B cell (primary cell): ENCODE measurements at regions of chr14 and their contacts with region 1.

Region 1: DNA sequence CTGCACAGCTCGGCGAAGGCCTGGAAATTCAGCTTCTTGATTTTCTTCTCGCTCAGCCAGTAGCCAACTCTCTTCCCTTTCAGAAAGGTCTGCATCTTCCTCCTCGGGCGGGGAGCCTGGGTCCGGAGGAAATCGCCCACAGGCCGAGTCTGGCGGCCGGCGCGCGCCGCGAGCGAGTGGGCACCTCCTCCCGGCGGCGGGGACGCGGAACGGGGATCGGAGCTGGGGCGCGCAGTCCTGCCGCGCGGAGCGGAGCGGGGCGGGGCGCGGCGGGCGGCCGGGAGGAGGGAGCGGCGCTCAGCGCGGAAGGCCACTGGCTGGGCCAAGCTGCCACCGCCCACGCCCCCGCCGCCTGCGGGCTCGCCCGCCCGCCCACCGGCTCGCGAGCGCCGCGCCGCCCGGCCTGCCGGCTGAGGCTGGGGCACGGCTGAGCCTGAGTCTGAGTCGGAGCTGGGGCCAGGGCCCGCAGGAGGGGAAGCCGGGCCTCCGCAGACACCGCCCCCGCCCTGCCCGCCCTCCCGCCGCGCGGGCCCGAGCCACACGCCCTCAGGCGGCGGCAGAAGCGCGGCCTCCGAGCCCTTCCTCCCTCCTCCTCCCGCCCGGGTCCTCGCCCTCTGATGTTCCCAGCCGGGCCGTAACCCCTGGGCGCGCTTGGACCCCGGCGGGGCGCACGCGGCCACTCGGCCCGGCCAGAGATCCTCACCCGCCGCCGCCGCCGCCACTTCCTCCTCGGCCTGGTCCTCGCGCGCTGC is 480 bp downstream of the ITPK1 start:
- DNase-seq: peak; percentile 92
- ATAC-seq: peak; percentile 74
- H3K4me3 ChIP-seq: peak overlapping the region; percentile 37 to 89 (median 79)
- H3K4me3 Mint-ChIP-seq: peak overlapping the region; percentile 92
- H3K27ac ChIP-seq: peak overlapping the region; percentile 34 to 74
- H3K27ac Mint-ChIP-seq: peak overlapping the region; percentile 89
- H3K4me1 ChIP-seq: peaks cover 27 to 34% of the 10 kb centered on the region in 2 donors
- H3K4me1 Mint-ChIP-seq: peaks cover 32% of the 10 kb centered on the region
- H3K27me3 ChIP-seq: no peaks in the 10 kb centered on the region
- H3K27me3 Mint-ChIP-seq: no peaks in the 10 kb centered on the region
- CTCF ChIP-seq: peak; percentile 12

Region 2: GRCh38 chr14:92951912-92952471 is 163.3 kb before region 1 on chr14:
- CTCF ChIA-PET with region 1: interaction called, 40 read pairs
- POLR2A ChIA-PET with region 1: no interaction called
- intact Hi-C with region 1: loop called (anchors 1 kb)
- DNase-seq: peak; percentile 82
- ATAC-seq: peak; percentile 96
- H3K4me3 ChIP-seq: no peak overlapping the region
- H3K4me3 Mint-ChIP-seq: no peak overlapping the region
- H3K27ac ChIP-seq: no peak overlapping the region
- H3K27ac Mint-ChIP-seq: no peak overlapping the region
- H3K4me1 ChIP-seq: peaks cover 0 to 5% of the 10 kb centered on the region in 2 donors
- H3K4me1 Mint-ChIP-seq: peaks cover 4% of the 10 kb centered on the region
- H3K27me3 ChIP-seq: no peaks in the 10 kb centered on the region
- H3K27me3 Mint-ChIP-seq: no peaks in the 10 kb centered on the region
- CTCF ChIP-seq: peak; percentile 88

Region 3: DNA sequence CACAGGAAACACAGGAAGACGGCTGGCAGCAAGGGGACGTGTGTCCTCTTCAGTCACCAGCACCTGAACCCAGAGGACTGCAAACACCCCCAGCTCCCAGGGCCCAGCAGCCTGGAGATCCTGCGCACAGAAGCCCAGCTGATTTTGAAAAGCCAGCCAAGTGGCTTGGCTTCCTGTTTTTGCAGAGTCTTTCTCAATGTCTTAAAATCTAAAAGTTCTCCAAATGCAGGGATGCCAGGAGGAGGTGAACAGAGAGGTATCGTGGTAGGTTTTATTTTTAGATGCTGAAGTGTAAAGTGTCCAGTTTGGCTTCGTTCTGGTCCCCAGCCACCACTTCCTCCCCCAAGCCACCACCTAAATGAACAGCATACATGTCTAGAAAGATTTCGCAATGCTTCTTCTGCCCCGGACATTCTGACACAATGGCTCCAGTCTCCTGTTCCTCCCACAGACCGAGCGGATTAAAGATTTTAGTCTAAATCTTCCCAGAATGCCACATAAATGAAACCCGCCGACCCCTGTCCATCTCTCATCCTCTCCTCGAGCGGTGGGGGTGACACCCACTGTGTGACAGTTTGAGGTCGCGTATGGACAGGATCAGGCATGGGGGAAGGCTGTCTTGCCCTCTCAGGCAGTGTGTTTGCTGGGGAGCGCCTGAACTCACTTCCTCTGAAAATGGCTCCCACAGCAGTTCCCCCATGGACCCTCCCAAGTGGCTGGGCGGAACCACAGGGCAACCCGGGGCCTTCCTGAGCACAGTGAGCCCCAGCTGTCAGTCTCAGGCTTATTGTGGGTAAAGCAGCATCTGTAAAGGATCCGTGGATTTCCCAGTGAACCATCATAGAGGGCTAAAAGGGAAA is 41.1 kb before region 1 on chr14:
- CTCF ChIA-PET with region 1: interaction called, 10 read pairs
- POLR2A ChIA-PET with region 1: interaction called, 3 read pairs
- intact Hi-C with region 1: no loop called
- DNase-seq: peak; percentile 33
- ATAC-seq: peak; percentile 60
- H3K4me3 ChIP-seq: peak overlapping the region; percentile 12 to 58 (median 30)
- H3K4me3 Mint-ChIP-seq: peak overlapping the region; percentile 87
- H3K27ac ChIP-seq: peak overlapping the region; percentile 56 to 65
- H3K27ac Mint-ChIP-seq: peak overlapping the region; percentile 92
- H3K4me1 ChIP-seq: peaks cover 30 to 50% of the 10 kb centered on the region in 2 donors
- H3K4me1 Mint-ChIP-seq: peaks cover 53% of the 10 kb centered on the region
- H3K27me3 ChIP-seq: no peaks in the 10 kb centered on the region
- H3K27me3 Mint-ChIP-seq: no peaks in the 10 kb centered on the region
- CTCF ChIP-seq: no peak

Region 4: GRCh38 chr14:93137864-93138263 is 22.6 kb after region 1 on chr14:
- CTCF ChIA-PET with region 1: interaction called, 78 read pairs
- POLR2A ChIA-PET with region 1: no interaction called
- intact Hi-C with region 1: loop called (anchors 1 kb)
- DNase-seq: no peak
- ATAC-seq: no peak
- H3K4me3 ChIP-seq: no peak overlapping the region
- H3K4me3 Mint-ChIP-seq: no peak overlapping the region
- H3K27ac ChIP-seq: no peak overlapping the region
- H3K27ac Mint-ChIP-seq: no peak overlapping the region
- H3K4me1 ChIP-seq: no peaks in the 10 kb centered on the region
- H3K4me1 Mint-ChIP-seq: peaks cover 2% of the 10 kb centered on the region
- H3K27me3 ChIP-seq: no peaks in the 10 kb centered on the region
- H3K27me3 Mint-ChIP-seq: no peaks in the 10 kb centered on the region
- CTCF ChIP-seq: no peak

Region 5: DNA sequence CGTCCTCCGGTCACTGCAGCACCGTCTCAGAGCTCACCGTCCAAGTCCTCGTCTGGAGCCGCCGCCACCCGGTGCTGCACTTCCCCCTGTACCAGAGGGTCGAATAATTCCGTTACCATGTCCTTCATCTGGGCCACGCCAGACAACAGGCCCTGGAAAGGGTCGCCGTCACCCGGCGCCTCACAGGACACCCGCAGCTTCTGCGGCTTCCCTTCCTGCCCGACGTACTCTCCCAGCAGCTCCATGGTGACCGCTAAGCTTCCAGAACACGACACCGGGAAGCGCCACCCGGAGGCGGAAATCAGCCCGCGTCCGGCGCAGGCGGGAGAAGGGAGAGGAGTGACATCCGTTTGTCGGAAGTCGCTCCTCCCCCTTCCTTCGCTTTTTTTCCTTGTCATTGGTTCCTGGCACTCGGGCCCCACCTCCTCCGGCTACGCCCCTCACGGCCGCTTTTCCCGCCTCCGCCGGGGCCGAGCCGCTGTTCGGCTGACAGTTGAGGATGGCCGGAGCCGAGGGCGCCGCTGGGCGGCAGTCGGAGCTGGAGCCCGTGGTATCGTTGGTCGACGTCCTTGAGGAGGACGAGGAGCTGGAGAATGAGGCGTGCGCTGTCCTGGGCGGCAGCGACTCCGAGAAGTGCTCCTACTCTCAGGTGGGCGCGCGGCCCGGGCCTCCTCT is 91.7 kb after region 1 on chr14 and contains the starts of genes GON7 and UBR7:
- CTCF ChIA-PET with region 1: interaction called, 14 read pairs
- POLR2A ChIA-PET with region 1: no interaction called
- intact Hi-C with region 1: loop called (anchors 1 kb)
- DNase-seq: peak; percentile 92
- ATAC-seq: peak; percentile 96
- H3K4me3 ChIP-seq: peak within 1 kb of the TSS; percentile 2 to 97 (median 94)
- H3K4me3 Mint-ChIP-seq: peak within 1 kb of the TSS; percentile 97
- H3K27ac ChIP-seq: peak within 1 kb of the TSS; percentile 64 to 84
- H3K27ac Mint-ChIP-seq: peak within 1 kb of the TSS; percentile 91
- H3K4me1 ChIP-seq: peaks cover 28 to 42% of the 10 kb centered on the region in 2 donors
- H3K4me1 Mint-ChIP-seq: peaks cover 54% of the 10 kb centered on the region
- H3K27me3 ChIP-seq: no peaks in the 10 kb centered on the region
- H3K27me3 Mint-ChIP-seq: no peaks in the 10 kb centered on the region
- CTCF ChIP-seq: peak; percentile 21
- total RNA-seq, gene GON7: 8.9 and 9.9 TPM in 2 replicates
- total RNA-seq, gene UBR7: 17.3 and 19.1 TPM in 2 replicates

Region 6: GRCh38 chr14:93269341-93270068 is 154.3 kb after region 1 on chr14:
- CTCF ChIA-PET with region 1: no interaction called
- POLR2A ChIA-PET with region 1: no interaction called
- intact Hi-C with region 1: no loop called
- DNase-seq: no peak
- ATAC-seq: no peak
- H3K4me3 ChIP-seq: no peak overlapping the region
- H3K4me3 Mint-ChIP-seq: no peak overlapping the region
- H3K27ac ChIP-seq: no peak overlapping the region
- H3K27ac Mint-ChIP-seq: no peak overlapping the region
- H3K4me1 ChIP-seq: no peaks in the 10 kb centered on the region
- H3K4me1 Mint-ChIP-seq: peaks cover 1% of the 10 kb centered on the region
- H3K27me3 ChIP-seq: no peaks in the 10 kb centered on the region
- H3K27me3 Mint-ChIP-seq: no peaks in the 10 kb centered on the region
- CTCF ChIP-seq: no peak

Region 7: GRCh38 chr14:93543766-93544165 is 428.5 kb after region 1 on chr14:
- CTCF ChIA-PET with region 1: interaction called, 10 read pairs
- POLR2A ChIA-PET with region 1: no interaction called
- intact Hi-C with region 1: loop called (anchors 5 kb)
- DNase-seq: peak; percentile 15
- ATAC-seq: no peak
- H3K4me3 ChIP-seq: no peak overlapping the region
- H3K4me3 Mint-ChIP-seq: no peak overlapping the region
- H3K27ac ChIP-seq: no peak overlapping the region
- H3K27ac Mint-ChIP-seq: no peak overlapping the region
- H3K4me1 ChIP-seq: peaks cover 0 to 3% of the 10 kb centered on the region in 2 donors
- H3K4me1 Mint-ChIP-seq: peaks cover 8% of the 10 kb centered on the region
- H3K27me3 ChIP-seq: peaks cover 0 to 2% (median 0%) of the 10 kb centered on the region in 4 experiments
- H3K27me3 Mint-ChIP-seq: peaks cover 4% of the 10 kb centered on the region
- CTCF ChIP-seq: peak; percentile 46